CD4-positive, alpha-beta T cell (primary cell): ENCODE measurements at regions of chr3 and their contacts with region 1.

Region 1: DNA sequence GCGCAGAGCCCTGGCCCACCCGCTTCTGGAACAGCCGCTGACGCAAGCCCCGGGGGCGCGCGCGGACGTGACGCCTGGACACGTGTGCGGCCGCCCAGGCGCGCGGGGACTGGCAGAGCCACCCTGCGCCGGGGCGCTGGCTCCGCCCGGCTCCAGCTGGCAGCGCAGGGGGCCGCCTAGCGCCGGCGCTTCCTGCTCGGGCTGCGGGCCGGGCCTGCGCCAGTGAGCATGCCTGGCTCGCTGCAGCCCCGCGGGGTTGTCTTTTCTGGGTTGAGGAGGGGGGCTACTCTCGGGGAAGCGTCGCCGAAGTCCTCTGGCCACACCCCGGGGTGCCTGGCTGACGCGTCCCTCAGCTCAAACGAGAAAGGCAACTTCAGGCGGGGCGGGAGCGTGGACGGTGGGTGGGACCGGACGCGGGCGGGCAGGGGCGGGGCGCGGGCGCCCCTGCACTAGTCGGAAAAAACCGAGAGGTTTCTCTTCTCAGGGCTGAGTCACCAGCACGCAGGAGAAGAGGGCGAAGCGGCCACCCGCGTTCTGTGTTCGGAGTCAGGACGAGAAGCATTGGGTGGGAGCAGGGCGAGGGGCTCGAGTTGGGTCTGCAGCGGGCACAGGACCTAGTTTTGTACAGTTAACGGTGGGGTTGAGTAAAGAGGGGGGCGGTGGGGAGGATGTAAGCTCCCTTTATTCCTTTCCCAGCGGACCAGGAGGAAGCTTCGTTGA is at the start of gene SIAH2:
- DNase-seq: peak; percentile 83 to 98 (median 90)
- ATAC-seq: peak; percentile 82
- H3K4me3 ChIP-seq: peak within 1 kb of the TSS; percentile 91
- H3K4me3 Mint-ChIP-seq: peak within 1 kb of the TSS; percentile 100
- H3K27ac ChIP-seq: peak within 1 kb of the TSS; percentile 98 to 99
- H3K27ac Mint-ChIP-seq: peak within 1 kb of the TSS; percentile 100
- H3K4me1 ChIP-seq: peaks cover 33% of the 10 kb centered on the region
- H3K4me1 Mint-ChIP-seq: peaks cover 47% of the 10 kb centered on the region
- H3K27me3 ChIP-seq: no peaks in the 10 kb centered on the region
- H3K27me3 Mint-ChIP-seq: no peaks in the 10 kb centered on the region
- CTCF ChIP-seq: no peak
- total RNA-seq, gene SIAH2: 73.7 to 76.1 TPM

Region 2: DNA sequence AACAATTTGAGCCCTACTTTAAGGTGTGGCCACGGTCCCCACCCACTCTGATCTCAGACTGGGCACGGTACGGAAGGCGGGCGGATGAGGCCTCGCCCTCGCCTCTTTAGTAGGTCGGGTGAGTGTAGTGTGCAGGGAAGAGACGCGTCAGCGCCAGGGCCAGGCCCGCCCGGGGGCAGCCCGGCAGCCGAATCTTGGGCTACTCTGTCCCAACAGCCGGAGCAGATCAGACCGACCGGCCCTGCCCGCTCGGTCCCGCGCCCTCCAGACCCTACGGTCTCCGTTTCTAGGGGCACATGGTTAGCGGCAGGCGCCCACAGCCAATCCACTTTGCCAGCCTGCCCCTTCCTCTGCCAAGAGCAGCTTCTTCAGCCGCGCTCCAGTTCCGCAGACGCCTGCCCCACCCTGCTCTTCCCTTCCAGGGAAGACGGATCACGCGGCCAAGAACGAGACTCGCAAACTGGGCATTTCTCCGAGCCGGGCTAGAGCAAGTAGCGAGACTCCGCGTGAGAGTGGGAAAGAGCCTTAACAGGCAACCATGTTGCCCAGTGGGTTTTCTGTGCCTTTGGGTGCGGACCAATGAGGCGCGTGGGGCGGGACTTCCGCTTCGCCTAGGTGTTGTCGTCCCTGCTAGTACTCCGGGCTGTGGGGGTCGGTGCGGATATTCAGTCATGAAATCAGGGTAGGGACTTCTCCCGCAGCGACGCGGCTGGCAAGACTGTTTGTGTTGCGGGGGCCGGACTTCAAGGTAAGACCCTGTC is 950.5 kb before region 1 on chr3 and contains the start of gene RNF13:
- CTCF ChIA-PET with region 1: no interaction called
- POLR2A ChIA-PET with region 1: no interaction called
- intact Hi-C with region 1: loop called in 1 of 2 experiments (anchors 10 kb)
- DNase-seq: peak; percentile 82 to 95 (median 90)
- ATAC-seq: peak; percentile 95
- H3K4me3 ChIP-seq: peak within 1 kb of the TSS; percentile 78
- H3K4me3 Mint-ChIP-seq: peak within 1 kb of the TSS; percentile 98
- H3K27ac ChIP-seq: peak within 1 kb of the TSS; percentile 86 to 95
- H3K27ac Mint-ChIP-seq: peak within 1 kb of the TSS; percentile 96
- H3K4me1 ChIP-seq: peaks cover 23% of the 10 kb centered on the region
- H3K4me1 Mint-ChIP-seq: peaks cover 60% of the 10 kb centered on the region
- H3K27me3 ChIP-seq: no peaks in the 10 kb centered on the region
- H3K27me3 Mint-ChIP-seq: peaks cover 4% of the 10 kb centered on the region
- CTCF ChIP-seq: no peak
- total RNA-seq, gene RNF13: 39.1 to 44.1 TPM

Region 3: GRCh38 chr3:150546226-150547044 is 216.8 kb before region 1 on chr3 and contains the starts of genes EIF2A and SERP1:
- CTCF ChIA-PET with region 1: interaction called, 4 read pairs
- POLR2A ChIA-PET with region 1: interaction called, 146 read pairs
- intact Hi-C with region 1: loop called (anchors 1 kb)
- DNase-seq: peak; percentile 98 to 100 (median 99)
- ATAC-seq: peak; percentile 88
- H3K4me3 ChIP-seq: peak within 1 kb of the TSS; percentile 86
- H3K4me3 Mint-ChIP-seq: peak within 1 kb of the TSS; percentile 91
- H3K27ac ChIP-seq: peak within 1 kb of the TSS; percentile 98 to 99
- H3K27ac Mint-ChIP-seq: peak within 1 kb of the TSS; percentile 93
- H3K4me1 ChIP-seq: peaks cover 19% of the 10 kb centered on the region
- H3K4me1 Mint-ChIP-seq: peaks cover 73% of the 10 kb centered on the region
- H3K27me3 ChIP-seq: no peaks in the 10 kb centered on the region
- H3K27me3 Mint-ChIP-seq: no peaks in the 10 kb centered on the region
- CTCF ChIP-seq: no peak
- total RNA-seq, gene EIF2A: 115 to 122 TPM
- total RNA-seq, gene SERP1: 141 to 147 TPM

Region 4: GRCh38 chr3:150643049-150643448 is 120.2 kb before region 1 on chr3:
- CTCF ChIA-PET with region 1: no interaction called
- POLR2A ChIA-PET with region 1: no interaction called
- intact Hi-C with region 1: no loop called
- DNase-seq: no peak
- ATAC-seq: no peak
- H3K4me3 ChIP-seq: no peak overlapping the region
- H3K4me3 Mint-ChIP-seq: no peak overlapping the region
- H3K27ac ChIP-seq: no peak overlapping the region
- H3K27ac Mint-ChIP-seq: no peak overlapping the region
- H3K4me1 ChIP-seq: no peaks in the 10 kb centered on the region
- H3K4me1 Mint-ChIP-seq: no peaks in the 10 kb centered on the region
- H3K27me3 ChIP-seq: peaks cover 0 to 6% of the 10 kb centered on the region in 2 experiments
- H3K27me3 Mint-ChIP-seq: peaks cover 16% of the 10 kb centered on the region
- CTCF ChIP-seq: no peak

Region 5: DNA sequence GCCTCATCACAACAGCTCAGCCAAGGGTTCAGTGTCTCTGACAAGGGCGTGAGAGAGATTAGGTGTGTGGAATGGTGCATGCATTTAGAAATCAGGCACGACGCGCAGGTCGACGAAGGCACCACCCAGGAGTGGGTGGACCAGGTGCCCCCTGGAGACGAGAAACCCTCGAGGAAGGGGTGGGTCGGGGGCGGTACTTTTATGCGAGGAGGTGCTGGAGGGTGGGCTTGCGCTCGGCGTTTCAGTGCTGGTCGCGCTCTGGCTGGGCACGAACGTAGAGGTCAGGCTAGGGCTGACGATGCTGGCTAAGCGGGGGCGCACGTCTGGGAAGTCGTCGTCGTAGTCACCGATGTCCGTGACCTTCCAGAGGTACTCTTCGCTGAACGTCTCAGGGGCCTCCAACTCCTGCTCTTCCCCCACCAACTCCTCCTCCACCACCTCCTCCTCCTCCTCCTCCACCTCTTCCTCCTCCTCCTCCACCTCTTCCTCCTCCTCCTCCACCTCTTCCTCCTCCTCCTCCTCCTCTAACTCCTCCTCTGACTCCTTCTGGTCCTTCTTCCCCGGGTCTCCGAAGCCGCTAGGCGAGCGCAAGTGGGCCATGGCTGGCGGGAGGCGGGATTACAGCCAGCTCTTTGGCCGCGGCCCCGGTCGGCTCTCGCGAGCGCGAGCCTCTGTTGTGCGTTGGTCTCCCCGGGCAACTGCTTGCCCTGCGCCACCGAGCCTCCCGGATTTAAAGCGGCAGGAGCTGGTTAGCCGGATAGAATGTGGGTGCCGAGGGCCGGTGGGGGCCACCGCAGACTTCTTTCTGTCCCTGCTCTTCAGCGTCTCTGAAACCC is 59.8 kb before region 1 on chr3 and contains the start of gene ERICH6:
- CTCF ChIA-PET with region 1: interaction called, 3 read pairs
- POLR2A ChIA-PET with region 1: interaction called, 72 read pairs
- intact Hi-C with region 1: loop called in 1 of 2 experiments (anchors 5 kb)
- DNase-seq: peak; percentile 54 to 90 (median 69)
- ATAC-seq: peak; percentile 71
- H3K4me3 ChIP-seq: peak within 1 kb of the TSS; percentile 90
- H3K4me3 Mint-ChIP-seq: peak within 1 kb of the TSS; percentile 99
- H3K27ac ChIP-seq: peak within 1 kb of the TSS; percentile 77 to 89
- H3K27ac Mint-ChIP-seq: peak within 1 kb of the TSS; percentile 99
- H3K4me1 ChIP-seq: peaks cover 17% of the 10 kb centered on the region
- H3K4me1 Mint-ChIP-seq: peaks cover 26% of the 10 kb centered on the region
- H3K27me3 ChIP-seq: no peaks in the 10 kb centered on the region
- H3K27me3 Mint-ChIP-seq: no peaks in the 10 kb centered on the region
- CTCF ChIP-seq: no peak
- total RNA-seq, gene ERICH6: not detected

Region 6: DNA sequence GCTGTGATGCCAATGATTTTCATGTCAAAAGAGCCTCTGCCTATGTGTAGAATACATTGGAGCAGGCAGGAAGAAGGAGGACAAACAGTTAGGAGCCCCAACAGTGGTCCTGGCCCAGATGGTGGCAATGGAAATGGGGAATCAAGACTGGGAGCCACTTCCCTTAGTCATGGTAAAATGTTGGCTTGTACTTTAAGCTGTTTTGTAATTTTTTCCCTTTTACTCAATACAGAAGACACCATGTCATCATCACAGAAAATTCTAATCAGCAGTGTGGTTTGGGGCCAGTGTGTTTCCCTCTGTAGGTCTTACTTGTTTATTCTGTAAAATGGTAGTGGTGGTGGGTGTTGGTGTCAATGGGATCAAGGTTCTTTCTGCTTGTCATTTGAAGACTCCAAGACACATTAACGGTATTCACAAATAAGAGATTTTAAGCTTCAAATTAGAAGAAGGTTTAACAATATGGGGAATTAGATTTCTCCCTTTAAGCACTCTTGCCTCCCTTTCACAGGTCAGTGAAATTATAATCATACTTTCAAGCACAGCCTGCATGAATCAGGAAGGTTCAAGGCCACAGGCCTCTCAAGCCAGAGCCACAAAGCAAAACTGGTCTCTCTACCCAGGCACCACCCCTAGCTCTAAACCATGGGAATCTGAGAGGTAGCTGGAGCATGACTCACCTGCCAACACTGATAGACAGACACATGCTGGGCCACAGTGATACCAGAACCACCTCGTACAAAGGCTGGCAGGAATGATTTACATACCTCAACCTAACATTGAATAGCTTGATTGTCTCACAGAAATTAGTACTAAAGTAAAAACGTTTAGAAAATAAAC is 25.2 kb before region 1 on chr3:
- CTCF ChIA-PET with region 1: interaction called, 3 read pairs
- POLR2A ChIA-PET with region 1: interaction called, 24 read pairs
- intact Hi-C with region 1: loop called in 1 of 2 experiments (anchors 2 kb)
- DNase-seq: no peak
- ATAC-seq: no peak
- H3K4me3 ChIP-seq: no peak overlapping the region
- H3K4me3 Mint-ChIP-seq: no peak overlapping the region
- H3K27ac ChIP-seq: no peak overlapping the region
- H3K27ac Mint-ChIP-seq: no peak overlapping the region
- H3K4me1 ChIP-seq: peaks cover 17% of the 10 kb centered on the region
- H3K4me1 Mint-ChIP-seq: peaks cover 58% of the 10 kb centered on the region
- H3K27me3 ChIP-seq: no peaks in the 10 kb centered on the region
- H3K27me3 Mint-ChIP-seq: no peaks in the 10 kb centered on the region
- CTCF ChIP-seq: no peak

Region 7: GRCh38 chr3:150775091-150775501 is 11.8 kb after region 1 on chr3:
- CTCF ChIA-PET with region 1: interaction called, 3 read pairs
- POLR2A ChIA-PET with region 1: interaction called, 21 read pairs
- intact Hi-C with region 1: no loop called
- DNase-seq: no peak
- ATAC-seq: no peak
- H3K4me3 ChIP-seq: no peak overlapping the region
- H3K4me3 Mint-ChIP-seq: no peak overlapping the region
- H3K27ac ChIP-seq: no peak overlapping the region
- H3K27ac Mint-ChIP-seq: no peak overlapping the region
- H3K4me1 ChIP-seq: no peaks in the 10 kb centered on the region
- H3K4me1 Mint-ChIP-seq: no peaks in the 10 kb centered on the region
- H3K27me3 ChIP-seq: no peaks in the 10 kb centered on the region
- H3K27me3 Mint-ChIP-seq: no peaks in the 10 kb centered on the region
- CTCF ChIP-seq: no peak